ENCODE measurements at regions of chr2 and their contacts with region 1.

Region 1: GRCh38 chr2:98412751-98413458 is 31.8 kb upstream of the INPP4A start:
- DNase-seq: peak; percentile 60
- H3K4me3 ChIP-seq: no peak overlapping the region
- H3K27ac ChIP-seq: no peak overlapping the region
- H3K4me1 ChIP-seq: no peaks in the 10 kb centered on the region; a peak in 1 of 4 replicates
- H3K27me3 ChIP-seq: no peaks in the 10 kb centered on the region
- CTCF ChIP-seq: peak; percentile 78
- EP300 ChIP-seq: no peak
- RAD21 ChIP-seq: peak; percentile 91

Region 2: GRCh38 chr2:98157557-98157956 is 255.3 kb before region 1 on chr2:
- CTCF ChIA-PET with region 1: no interaction called
- POLR2A ChIA-PET with region 1: no interaction called
- DNase-seq: no peak
- H3K4me3 ChIP-seq: no peak overlapping the region
- H3K27ac ChIP-seq: no peak overlapping the region
- H3K4me1 ChIP-seq: no peaks in the 10 kb centered on the region; a peak in 1 of 4 replicates
- H3K27me3 ChIP-seq: no peaks in the 10 kb centered on the region; the same call in 1 of the 2 replicates
- CTCF ChIP-seq: no peak
- EP300 ChIP-seq: no peak
- RAD21 ChIP-seq: no peak

Region 3: DNA sequence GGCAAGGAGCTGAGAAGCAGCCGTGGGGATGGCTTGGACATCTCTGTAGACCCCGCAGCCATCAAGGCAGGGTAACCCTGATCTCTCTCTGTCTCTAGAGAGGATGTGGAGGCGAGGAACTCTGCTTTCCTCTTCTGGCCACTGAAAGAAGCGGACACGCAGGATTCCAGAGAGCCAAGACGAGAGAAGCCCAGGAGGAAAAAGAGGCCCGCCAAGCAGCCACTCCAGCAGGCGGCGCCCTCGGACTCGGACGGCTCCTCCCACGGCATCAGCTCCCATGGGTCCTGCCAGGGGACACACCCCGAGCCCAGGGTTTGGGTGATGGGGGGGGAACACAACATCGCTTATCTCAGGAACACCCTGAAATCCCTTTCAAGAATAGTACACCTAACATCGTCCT is 101.2 kb before region 1 on chr2:
- CTCF ChIA-PET with region 1: no interaction called
- POLR2A ChIA-PET with region 1: no interaction called
- DNase-seq: no peak
- H3K4me3 ChIP-seq: no peak overlapping the region
- H3K27ac ChIP-seq: no peak overlapping the region
- H3K4me1 ChIP-seq: no peaks in the 10 kb centered on the region
- H3K27me3 ChIP-seq: no peaks in the 10 kb centered on the region
- CTCF ChIP-seq: no peak
- EP300 ChIP-seq: no peak
- RAD21 ChIP-seq: no peak

Region 4: GRCh38 chr2:98334439-98335078 is 78.3 kb before region 1 on chr2:
- CTCF ChIA-PET with region 1: no interaction called
- POLR2A ChIA-PET with region 1: no interaction called
- DNase-seq: peak; percentile 54
- H3K4me3 ChIP-seq: peak overlapping the region; percentile 9 to 19; a peak in 1 of 4 replicates
- H3K27ac ChIP-seq: peak overlapping the region; percentile 36 to 92; a peak in 3 of 4 replicates
- H3K4me1 ChIP-seq: peaks cover 7 to 15% of the 10 kb centered on the region in 2 experiments
- H3K27me3 ChIP-seq: no peaks in the 10 kb centered on the region
- CTCF ChIP-seq: no peak
- EP300 ChIP-seq: peak; percentile 53 to 80
- RAD21 ChIP-seq: no peak

Region 5: GRCh38 chr2:98444436-98445176 is 31.7 kb after region 1 on chr2 and contains the start of gene INPP4A:
- CTCF ChIA-PET with region 1: interaction called, 11 read pairs
- POLR2A ChIA-PET with region 1: no interaction called
- DNase-seq: peak; percentile 98
- H3K4me3 ChIP-seq: peak within 1 kb of the TSS; percentile 67 to 84
- H3K27ac ChIP-seq: peak within 1 kb of the TSS; percentile 50 to 67
- H3K4me1 ChIP-seq: peaks cover 8 to 18% of the 10 kb centered on the region in 2 experiments; a peak in 3 of 4 replicates
- H3K27me3 ChIP-seq: no peaks in the 10 kb centered on the region
- CTCF ChIP-seq: no peak
- EP300 ChIP-seq: no peak
- RAD21 ChIP-seq: no peak
- polyA plus RNA-seq, gene INPP4A: 15.0 and 18.3 TPM in 2 replicates

Region 6: DNA sequence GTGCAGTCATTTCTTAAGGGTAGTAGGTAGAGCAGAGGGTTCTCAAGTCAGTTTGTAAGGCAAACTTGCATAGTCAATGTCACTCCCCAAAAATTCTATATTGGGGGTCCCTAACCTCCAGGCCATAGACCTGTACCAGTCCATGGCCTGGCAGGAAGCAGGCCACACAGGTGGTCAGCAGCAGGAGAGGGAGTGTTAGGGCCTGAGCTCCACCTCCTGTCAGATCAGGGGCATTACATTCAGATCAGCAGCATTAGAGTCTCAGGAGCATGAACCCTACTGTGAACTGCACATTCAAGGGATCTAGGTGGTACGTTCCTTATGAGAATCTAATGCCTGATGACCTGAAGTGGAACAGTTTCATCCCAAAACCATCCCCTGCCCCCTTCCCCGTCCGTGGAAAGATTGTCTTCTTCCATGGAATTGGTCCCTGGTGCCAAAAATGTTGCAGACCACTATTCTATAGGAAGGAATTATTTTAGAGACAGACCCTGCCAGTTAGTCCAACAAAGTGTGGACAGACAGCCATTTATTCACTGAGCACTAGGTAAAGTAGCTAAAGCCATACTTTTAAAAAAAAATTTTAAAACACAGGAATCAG is 188.7 kb after region 1 on chr2:
- CTCF ChIA-PET with region 1: interaction called, 15 read pairs
- POLR2A ChIA-PET with region 1: no interaction called
- DNase-seq: peak; percentile 65
- H3K4me3 ChIP-seq: no peak overlapping the region
- H3K27ac ChIP-seq: no peak overlapping the region
- H3K4me1 ChIP-seq: peaks cover 0 to 30% of the 10 kb centered on the region in 2 experiments; a peak in 2 of 4 replicates
- H3K27me3 ChIP-seq: no peaks in the 10 kb centered on the region
- CTCF ChIP-seq: peak; percentile 67
- EP300 ChIP-seq: no peak
- RAD21 ChIP-seq: peak; percentile 79